Aorta (tissue), 5 donors: ENCODE measurements at regions of chr15 and their contacts with region 1.

Region 1: GRCh38 chr15:40440743-40441564 is at the start of gene BAHD1:
- DNase-seq: peak; percentile 98 to 99
- ATAC-seq: peak; percentile 94
- H3K4me3 ChIP-seq: peak within 1 kb of the TSS; percentile 91 to 97
- H3K27ac ChIP-seq: peak within 1 kb of the TSS in 1 of 2 donors; percentile 6
- H3K4me1 ChIP-seq: peaks cover 0 to 2% of the 10 kb centered on the region in 2 donors
- H3K27me3 ChIP-seq: no peaks in the 10 kb centered on the region
- total RNA-seq, gene BAHD1: 17.5 to 21.2 TPM

Region 2: GRCh38 chr15:40493089-40493840 is 52.3 kb after region 1 on chr15:
- intact Hi-C with region 1: no loop called
- DNase-seq: peak in 1 of 2 donors; percentile 11
- ATAC-seq: no peak
- H3K4me3 ChIP-seq: no peak overlapping the region
- H3K27ac ChIP-seq: no peak overlapping the region
- H3K4me1 ChIP-seq: no peaks in the 10 kb centered on the region
- H3K27me3 ChIP-seq: no peaks in the 10 kb centered on the region

Region 3: DNA sequence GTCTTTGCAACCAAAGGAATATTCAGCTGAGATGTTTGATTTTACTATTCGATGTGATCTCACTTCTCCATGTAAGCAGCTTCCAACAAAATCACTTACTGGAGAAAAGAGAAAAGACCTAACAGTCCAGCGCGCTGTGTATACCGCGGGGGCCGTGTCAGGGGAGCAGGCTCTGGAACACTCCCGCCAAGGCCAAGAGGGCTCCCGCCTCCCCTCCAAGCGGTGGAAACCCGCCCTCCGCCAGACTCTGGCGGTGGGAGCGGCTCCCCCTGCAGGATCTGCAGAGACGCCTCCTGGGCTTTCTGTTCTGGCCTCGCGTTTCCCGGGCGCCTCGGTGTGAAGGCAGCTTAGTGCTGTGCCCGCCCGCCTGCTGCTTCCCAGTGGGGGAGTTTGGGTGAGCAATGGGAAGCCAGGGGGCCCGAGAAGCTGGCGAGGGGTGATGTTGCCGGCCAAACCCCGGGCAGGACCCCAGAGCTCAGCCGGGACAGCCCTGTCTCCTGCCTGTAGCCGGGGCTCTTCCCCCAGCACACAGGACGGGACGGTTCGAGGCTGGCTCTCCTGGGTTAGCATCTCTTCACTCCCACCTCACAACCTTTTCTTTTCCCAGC is 66.1 kb after region 1 on chr15:
- intact Hi-C with region 1: loop called in 1 of 2 experiments (anchors 5 kb)
- DNase-seq: peak; percentile 80 to 89
- ATAC-seq: peak; percentile 88
- H3K4me3 ChIP-seq: no peak overlapping the region
- H3K27ac ChIP-seq: no peak overlapping the region
- H3K4me1 ChIP-seq: no peaks in the 10 kb centered on the region
- H3K27me3 ChIP-seq: no peaks in the 10 kb centered on the region

Region 4: DNA sequence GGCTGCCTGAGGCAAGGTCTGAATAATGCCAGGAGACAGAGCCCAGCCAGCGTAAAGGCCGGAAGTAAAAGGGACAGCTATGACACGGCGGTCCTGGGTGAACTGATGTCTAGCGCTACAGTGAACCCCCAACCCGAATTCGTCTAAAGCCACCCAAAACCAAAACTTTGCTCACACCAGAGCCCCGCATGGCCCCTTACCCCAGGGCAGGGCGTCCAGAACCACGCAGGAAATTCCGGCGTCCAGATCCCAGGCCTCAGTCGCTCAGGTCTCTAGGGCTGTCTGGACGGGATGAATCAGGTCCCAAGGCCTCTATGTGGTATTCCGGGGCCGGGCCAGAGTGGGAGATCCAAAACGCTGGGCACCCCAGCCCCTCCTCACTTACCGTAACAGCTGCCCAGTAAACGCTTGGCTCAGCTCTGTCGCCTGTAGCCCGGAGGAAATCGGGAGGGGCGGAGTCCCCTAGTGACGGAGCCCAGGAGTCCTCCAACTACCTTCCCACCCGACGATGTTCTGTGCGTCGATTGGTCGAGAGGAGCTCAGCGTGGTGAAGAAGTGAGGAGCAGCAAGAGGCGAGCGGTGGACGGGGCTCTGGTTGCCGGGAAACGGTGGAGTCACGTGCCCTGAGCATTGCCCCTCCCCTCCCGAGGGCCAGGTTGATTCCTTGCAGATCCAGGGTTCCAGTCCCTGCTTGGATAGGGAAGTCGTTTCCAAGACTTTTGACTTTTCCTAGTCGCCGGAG is 123.8 kb after region 1 on chr15 and contains the start of gene CCDC32:
- intact Hi-C with region 1: loop called in 1 of 2 experiments (anchors 10 kb)
- DNase-seq: peak; percentile 98 to 99
- ATAC-seq: peak; percentile 98
- H3K4me3 ChIP-seq: peak within 1 kb of the TSS; percentile 32 to 45
- H3K27ac ChIP-seq: peak within 1 kb of the TSS; percentile 25 to 70
- H3K4me1 ChIP-seq: peaks cover 0 to 5% of the 10 kb centered on the region in 2 donors
- H3K27me3 ChIP-seq: no peaks in the 10 kb centered on the region
- total RNA-seq, gene CCDC32: 32.0 to 34.0 TPM